Breast epithelium (tissue), 4 donors: ENCODE measurements at regions of chr16 and their contacts with region 1.

Region 1: GRCh38 chr16:63714876-63715275 is 1407.0 kb downstream of the CDH11 start:
- DNase-seq: no peak
- H3K4me3 ChIP-seq: no peak overlapping the region
- H3K27ac ChIP-seq: no peak overlapping the region
- H3K4me1 ChIP-seq: no peaks in the 10 kb centered on the region
- H3K27me3 ChIP-seq: no peaks in the 10 kb centered on the region
- CTCF ChIP-seq: no peak
- POLR2A ChIP-seq: no peak

Region 2: GRCh38 chr16:64957246-64957645 is 1242.4 kb after region 1 on chr16:
- intact Hi-C with region 1: loop called (anchors 5 kb)
- DNase-seq: no peak
- H3K4me3 ChIP-seq: no peak overlapping the region
- H3K27ac ChIP-seq: no peak overlapping the region
- H3K4me1 ChIP-seq: no peaks in the 10 kb centered on the region
- H3K27me3 ChIP-seq: no peaks in the 10 kb centered on the region
- CTCF ChIP-seq: no peak
- POLR2A ChIP-seq: no peak